Breast epithelium (tissue), 4 donors: ENCODE measurements at regions of chr13 and their contacts with region 1.

Region 1: GRCh38 chr13:32340914-32341313 is 25.6 kb downstream of the BRCA2 start:
- DNase-seq: no peak
- H3K4me3 ChIP-seq: no peak overlapping the region
- H3K27ac ChIP-seq: no peak overlapping the region
- H3K4me1 ChIP-seq: no peaks in the 10 kb centered on the region
- H3K27me3 ChIP-seq: no peaks in the 10 kb centered on the region
- CTCF ChIP-seq: no peak
- POLR2A ChIP-seq: no peak

Region 2: GRCh38 chr13:34025746-34026145 is 1684.8 kb after region 1 on chr13:
- intact Hi-C with region 1: loop called (anchors 5 kb)
- DNase-seq: no peak
- H3K4me3 ChIP-seq: no peak overlapping the region
- H3K27ac ChIP-seq: no peak overlapping the region
- H3K4me1 ChIP-seq: no peaks in the 10 kb centered on the region
- H3K27me3 ChIP-seq: no peaks in the 10 kb centered on the region
- CTCF ChIP-seq: no peak
- POLR2A ChIP-seq: no peak